Sigmoid colon (tissue), 7 donors: ENCODE measurements at regions of chr9 and their contacts with region 1.

Region 1: GRCh38 chr9:36190388-36191287 is at the start of gene CLTA:
- DNase-seq: peak; percentile 99
- H3K4me3 ChIP-seq: peak within 1 kb of the TSS; percentile 86 to 98 (median 90)
- H3K27ac ChIP-seq: peak within 1 kb of the TSS; percentile 90 to 95 (median 92)
- H3K4me1 ChIP-seq: peaks cover 0 to 46% (median 41%) of the 10 kb centered on the region in 4 donors
- H3K27me3 ChIP-seq: no peaks in the 10 kb centered on the region
- CTCF ChIP-seq: peak; percentile 22 to 53 (median 48)
- EP300 ChIP-seq: no peak
- POLR2A ChIP-seq: peak; percentile 72 to 91
- total RNA-seq, gene CLTA: 151 to 176 (median 169) TPM

Region 2: DNA sequence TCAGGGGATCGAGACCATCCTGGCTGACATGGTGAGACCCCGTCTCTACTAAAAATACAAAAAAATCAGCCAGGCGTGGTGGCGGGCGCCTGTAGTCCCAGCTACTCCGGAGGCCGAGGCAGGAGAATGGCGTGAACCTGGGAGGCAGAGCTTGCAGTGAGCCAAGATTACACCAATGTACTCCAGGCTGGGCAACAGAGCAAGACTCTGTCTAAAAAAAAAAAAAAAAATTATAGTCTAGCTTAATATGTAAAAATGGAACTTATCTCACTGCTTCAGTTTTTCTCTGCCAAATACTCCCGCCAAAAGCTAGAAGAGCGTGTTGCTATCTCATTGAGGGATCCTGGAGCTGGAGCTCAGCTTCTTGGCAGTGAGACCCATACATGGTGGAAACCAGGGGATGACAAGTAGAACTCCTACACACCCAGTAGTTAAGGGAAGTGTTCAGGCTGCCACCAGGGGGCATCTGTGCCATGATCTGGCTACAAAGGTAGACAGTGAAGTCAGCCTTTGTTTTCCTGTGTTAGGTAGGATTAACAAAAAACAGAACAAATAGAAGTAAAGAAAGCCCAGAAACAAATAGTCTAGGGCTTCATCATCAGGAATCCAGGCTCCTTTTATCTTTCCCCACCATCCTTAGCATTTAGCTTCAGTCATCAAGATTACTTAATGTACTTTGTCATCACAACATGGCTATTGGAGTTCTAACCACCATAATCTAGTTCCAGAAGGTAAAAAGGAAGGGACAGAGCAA is 87.7 kb before region 1 on chr9:
- intact Hi-C with region 1: loop called (anchors 2 kb)
- DNase-seq: peak; percentile 92
- H3K4me3 ChIP-seq: no peak overlapping the region
- H3K27ac ChIP-seq: peak overlapping the region in 2 of 4 donors; percentile 21 to 37
- H3K4me1 ChIP-seq: peaks cover 0 to 4% (median 0%) of the 10 kb centered on the region in 4 donors
- H3K27me3 ChIP-seq: no peaks in the 10 kb centered on the region
- CTCF ChIP-seq: peak; percentile 62 to 87 (median 81)
- EP300 ChIP-seq: no peak
- POLR2A ChIP-seq: no peak

Region 3: GRCh38 chr9:36126016-36126730 is 64.5 kb before region 1 on chr9:
- intact Hi-C with region 1: no loop called
- DNase-seq: no peak
- H3K4me3 ChIP-seq: no peak overlapping the region
- H3K27ac ChIP-seq: no peak overlapping the region
- H3K4me1 ChIP-seq: no peaks in the 10 kb centered on the region
- H3K27me3 ChIP-seq: no peaks in the 10 kb centered on the region
- CTCF ChIP-seq: no peak
- EP300 ChIP-seq: no peak
- POLR2A ChIP-seq: no peak

Region 4: GRCh38 chr9:36136272-36136893 is 54.3 kb before region 1 on chr9 and contains the start of gene GLIPR2:
- intact Hi-C with region 1: loop called (anchors 2 kb)
- DNase-seq: peak; percentile 92
- H3K4me3 ChIP-seq: peak within 1 kb of the TSS; percentile 69 to 99 (median 91)
- H3K27ac ChIP-seq: peak within 1 kb of the TSS; percentile 90 to 99 (median 96)
- H3K4me1 ChIP-seq: peaks cover 0 to 56% (median 46%) of the 10 kb centered on the region in 4 donors
- H3K27me3 ChIP-seq: no peaks in the 10 kb centered on the region
- CTCF ChIP-seq: peak in 1 of 4 experiments; percentile 28
- EP300 ChIP-seq: no peak
- POLR2A ChIP-seq: peak; percentile 48 to 58
- total RNA-seq, gene GLIPR2: 57.3 to 90.6 (median 77.6) TPM

Region 5: DNA sequence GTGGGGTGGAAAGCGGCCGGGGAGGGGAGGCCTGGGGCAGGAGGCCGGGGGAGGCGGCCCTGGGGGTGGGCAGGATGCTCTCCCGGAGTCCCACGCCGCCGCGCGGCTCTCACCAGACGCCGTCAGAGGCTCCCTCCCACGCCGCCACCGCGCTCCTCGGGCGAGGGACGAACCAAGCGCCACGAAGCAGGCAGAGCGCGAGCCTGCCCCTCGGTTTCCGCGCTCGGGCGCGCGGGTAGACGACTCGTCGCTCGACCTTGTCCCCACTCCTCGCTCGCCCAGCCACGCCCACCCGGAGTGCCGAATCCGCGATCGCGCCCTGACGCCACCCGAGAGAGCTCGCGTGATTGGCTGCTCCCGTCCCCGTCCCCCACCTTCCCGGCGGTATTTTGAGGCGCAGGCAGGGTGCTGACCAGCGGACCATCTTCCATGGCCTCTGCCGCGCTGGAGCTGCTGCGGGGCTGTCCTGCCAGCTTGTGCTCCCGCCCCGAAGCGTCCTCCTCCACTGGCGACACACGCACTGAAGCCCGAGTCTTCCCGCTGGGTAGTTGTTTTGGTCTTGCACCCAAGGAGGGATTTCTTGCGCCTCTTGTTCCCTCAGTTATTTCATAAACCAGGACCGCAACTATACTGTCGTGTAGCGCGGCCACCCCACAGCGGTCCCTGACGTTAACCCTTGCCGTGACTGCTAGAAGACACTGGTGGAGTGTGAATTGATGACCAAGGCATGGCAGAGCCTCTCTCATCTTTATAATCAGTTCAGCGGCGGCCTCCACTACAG is 67.8 kb after region 1 on chr9 and contains the start of gene GNE:
- intact Hi-C with region 1: loop called (anchors 2 kb)
- DNase-seq: peak; percentile 99
- H3K4me3 ChIP-seq: peak within 1 kb of the TSS; percentile 69 to 98 (median 90)
- H3K27ac ChIP-seq: peak within 1 kb of the TSS; percentile 94 to 100 (median 100)
- H3K4me1 ChIP-seq: peaks cover 0 to 17% (median 14%) of the 10 kb centered on the region in 4 donors
- H3K27me3 ChIP-seq: no peaks in the 10 kb centered on the region
- CTCF ChIP-seq: no peak
- EP300 ChIP-seq: no peak
- POLR2A ChIP-seq: peak; percentile 81 to 87
- total RNA-seq, gene GNE: 22.5 to 28.2 (median 25.2) TPM

Region 6: DNA sequence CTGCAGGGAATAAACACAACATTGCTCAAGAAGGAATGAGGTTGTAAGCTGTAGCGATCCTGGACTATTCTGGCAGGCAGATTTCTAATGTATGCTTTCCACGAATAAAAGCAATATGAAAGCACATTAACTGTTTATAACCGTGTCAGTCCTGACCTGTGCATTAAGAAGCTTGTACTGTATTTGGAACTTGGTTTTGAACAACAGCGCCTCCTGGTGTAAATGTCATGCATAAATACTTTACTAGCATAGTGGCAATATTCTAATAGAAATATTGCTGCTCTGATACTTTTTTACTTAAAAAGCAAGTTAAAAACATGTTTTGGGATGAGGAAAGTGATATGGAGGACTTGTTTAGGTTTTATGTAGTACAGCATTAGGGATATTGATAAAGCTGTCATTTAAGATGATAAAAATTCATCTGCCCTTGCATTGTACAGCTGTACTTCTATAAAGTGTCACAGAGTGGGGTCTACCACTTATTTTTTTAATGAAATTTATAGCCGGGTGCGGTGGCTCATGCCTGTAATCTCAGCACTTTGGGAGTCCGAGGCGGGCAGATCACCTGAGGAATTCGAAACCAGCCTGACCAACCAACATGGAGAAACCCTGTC is 138.3 kb after region 1 on chr9:
- intact Hi-C with region 1: loop called (anchors 5 kb)
- DNase-seq: no peak
- H3K4me3 ChIP-seq: no peak overlapping the region
- H3K27ac ChIP-seq: no peak overlapping the region
- H3K4me1 ChIP-seq: peaks cover 0 to 11% (median 0%) of the 10 kb centered on the region in 4 donors
- H3K27me3 ChIP-seq: no peaks in the 10 kb centered on the region
- CTCF ChIP-seq: peak; percentile 69 to 86 (median 79)
- EP300 ChIP-seq: no peak
- POLR2A ChIP-seq: no peak

Region 7: GRCh38 chr9:36487482-36488388 is 297.1 kb after region 1 on chr9:
- intact Hi-C with region 1: loop called (anchors 5 kb)
- DNase-seq: peak; percentile 95
- H3K4me3 ChIP-seq: peak overlapping the region; percentile 36 to 100 (median 92)
- H3K27ac ChIP-seq: peak overlapping the region; percentile 90 to 94 (median 92)
- H3K4me1 ChIP-seq: peaks cover 0 to 33% (median 27%) of the 10 kb centered on the region in 4 donors
- H3K27me3 ChIP-seq: no peaks in the 10 kb centered on the region
- CTCF ChIP-seq: peak in 1 of 4 experiments; percentile 21
- EP300 ChIP-seq: no peak
- POLR2A ChIP-seq: peak; percentile 56 to 60